AG04449 (cell line): ENCODE measurements at regions of chr11 and their contacts with region 1.

Region 1: DNA sequence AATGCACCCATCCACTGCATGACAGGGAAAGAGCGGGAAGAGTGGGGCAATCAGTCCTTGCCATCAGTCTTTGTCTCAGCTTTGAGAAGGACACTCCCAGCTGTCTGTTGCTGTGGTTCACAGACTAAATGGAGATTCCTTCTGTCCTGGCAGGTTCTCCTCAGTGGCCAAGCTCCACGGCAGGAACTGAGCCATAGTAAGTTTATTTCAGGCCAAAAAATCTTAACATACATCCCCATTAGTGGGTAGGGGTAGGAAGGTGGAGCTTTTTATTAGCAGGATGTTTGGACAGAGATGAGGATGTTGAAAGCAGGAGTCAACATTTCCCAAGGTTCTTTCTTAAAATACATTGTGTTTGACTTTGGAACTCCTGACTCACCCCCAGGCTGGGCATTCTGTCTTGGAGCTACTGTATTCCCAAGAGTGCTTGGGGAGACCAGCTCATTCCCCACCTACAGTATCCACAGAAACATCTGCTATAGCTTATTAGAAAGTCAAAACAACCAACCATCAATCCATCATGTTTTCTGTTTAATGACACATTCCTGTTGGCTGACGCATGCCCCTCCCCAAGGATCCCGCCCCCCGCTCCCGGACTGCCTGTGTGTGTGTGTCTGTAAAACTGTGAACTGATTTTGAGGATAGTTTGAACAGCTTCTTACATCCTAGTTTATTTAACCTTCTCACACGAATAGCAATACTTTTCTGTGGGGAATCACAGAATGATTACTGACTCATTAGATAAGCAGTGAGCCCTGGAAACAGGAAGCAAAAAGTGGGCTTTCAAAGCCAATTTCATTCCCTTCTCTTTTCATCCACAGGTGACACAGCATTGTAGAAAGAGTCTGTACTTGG is 109.5 kb downstream of the CCDC81 start:
- DNase-seq: peak; percentile 98
- H3K4me3 ChIP-seq: no peak overlapping the region
- CTCF ChIP-seq: no peak

Region 2: GRCh38 chr11:86431258-86431657 is 52.9 kb before region 1 on chr11:
- CTCF ChIA-PET with region 1: no interaction called
- POLR2A ChIA-PET with region 1: no interaction called
- DNase-seq: no peak
- H3K4me3 ChIP-seq: no peak overlapping the region
- CTCF ChIP-seq: no peak

Region 3: DNA sequence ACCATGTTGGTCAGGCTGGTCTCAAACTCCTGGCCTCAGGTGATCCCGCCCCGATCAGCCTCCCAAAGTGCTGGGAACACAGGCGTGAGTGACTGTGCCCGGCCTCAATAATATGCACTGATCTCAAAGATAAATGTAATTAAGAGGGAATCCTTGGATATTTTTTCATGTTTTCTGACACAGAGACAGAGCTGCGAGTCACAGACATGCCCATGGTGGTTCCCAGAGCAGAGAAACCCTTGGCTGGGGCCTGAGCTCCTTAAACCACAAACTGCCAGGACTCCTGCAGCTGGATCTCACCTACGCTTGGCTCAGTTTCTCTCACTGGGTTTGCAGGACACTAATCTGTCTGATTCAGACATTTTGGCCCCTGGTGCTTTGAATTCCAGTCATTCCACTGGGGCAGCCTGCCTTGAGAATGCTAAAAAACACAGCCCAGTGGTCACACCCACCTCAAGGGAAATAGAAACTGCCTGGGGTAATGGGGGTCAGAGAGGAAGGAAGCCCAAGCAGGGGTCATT is 13.1 kb after region 1 on chr11:
- CTCF ChIA-PET with region 1: interaction called, 9 read pairs
- POLR2A ChIA-PET with region 1: interaction called, 10 read pairs
- DNase-seq: peak; percentile 54
- H3K4me3 ChIP-seq: no peak overlapping the region
- CTCF ChIP-seq: no peak

Region 4: GRCh38 chr11:86660088-86660487 is 175.9 kb after region 1 on chr11:
- CTCF ChIA-PET with region 1: no interaction called
- POLR2A ChIA-PET with region 1: no interaction called
- DNase-seq: no peak
- H3K4me3 ChIP-seq: no peak overlapping the region
- CTCF ChIP-seq: no peak